ENCODE measurements at regions of chr16 and their contacts with region 1.

Region 1: GRCh38 chr16:84013787-84014569 is 28.6 kb downstream of the SLC38A8 start:
- DNase-seq: peak; percentile 98
- H3K4me3 ChIP-seq: no peak overlapping the region
- H3K27ac ChIP-seq: no peak overlapping the region
- H3K4me1 ChIP-seq: no peaks in the 10 kb centered on the region
- H3K27me3 ChIP-seq: no peaks in the 10 kb centered on the region
- CTCF ChIP-seq: no peak

Region 2: DNA sequence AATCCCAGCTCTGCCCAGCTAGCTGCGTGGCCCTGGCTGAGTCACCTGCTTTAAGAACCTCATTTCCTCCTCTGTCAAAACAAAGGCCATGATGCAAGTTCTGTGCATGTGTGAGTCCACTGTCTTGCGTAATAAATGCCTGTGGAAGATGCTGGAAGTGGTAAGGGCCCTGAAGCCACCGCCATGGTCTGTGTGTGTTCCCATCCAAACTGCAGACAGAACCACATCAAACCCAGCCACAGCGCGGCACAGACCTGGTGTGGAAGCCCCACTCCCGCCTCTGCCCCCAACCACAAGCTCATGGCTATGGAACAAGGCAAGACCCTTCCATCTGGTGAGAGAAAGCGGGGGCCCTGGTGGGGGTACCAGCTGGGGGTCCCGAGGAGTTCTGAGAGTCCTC is 19.9 kb before region 1 on chr16:
- CTCF ChIA-PET with region 1: no interaction called
- dilution Hi-C with region 1: no loop called
- in situ Hi-C with region 1: no loop called
- intact Hi-C with region 1: loop called (anchors 2 kb)
- DNase-seq: peak; percentile 88
- H3K4me3 ChIP-seq: no peak overlapping the region
- H3K27ac ChIP-seq: no peak overlapping the region
- H3K4me1 ChIP-seq: peaks cover 14% of the 10 kb centered on the region
- H3K27me3 ChIP-seq: peaks cover 5% of the 10 kb centered on the region
- CTCF ChIP-seq: no peak

Region 3: DNA sequence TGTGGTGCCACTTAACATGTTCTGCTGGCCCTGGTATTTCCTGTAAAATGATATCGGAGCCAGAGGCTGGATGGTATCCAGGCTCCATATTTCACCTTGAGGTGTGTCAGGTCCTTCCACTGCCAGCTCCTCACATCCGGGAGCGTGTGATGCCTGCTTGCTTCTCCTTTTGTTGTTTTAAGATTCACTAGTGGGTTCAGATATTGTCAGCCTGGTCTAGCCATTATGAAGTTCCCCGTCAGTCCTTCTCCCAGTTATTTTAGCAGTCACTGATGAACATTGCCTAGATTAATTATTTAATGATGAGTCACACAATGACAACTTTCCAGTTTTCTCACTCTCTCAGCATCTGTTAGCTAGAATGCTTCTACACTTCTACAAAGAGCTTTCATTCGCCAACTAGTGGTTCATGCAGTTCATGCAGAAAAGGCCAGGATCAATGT is 142.4 kb after region 1 on chr16:
- CTCF ChIA-PET with region 1: no interaction called
- dilution Hi-C with region 1: no loop called
- in situ Hi-C with region 1: no loop called
- intact Hi-C with region 1: no loop called
- DNase-seq: peak; percentile 19
- H3K4me3 ChIP-seq: no peak overlapping the region
- H3K27ac ChIP-seq: no peak overlapping the region
- H3K4me1 ChIP-seq: no peaks in the 10 kb centered on the region
- H3K27me3 ChIP-seq: no peaks in the 10 kb centered on the region
- CTCF ChIP-seq: peak; percentile 22 to 29

Region 4: GRCh38 chr16:84332975-84333684 is 319.2 kb after region 1 on chr16:
- CTCF ChIA-PET with region 1: no interaction called
- dilution Hi-C with region 1: no loop called
- in situ Hi-C with region 1: no loop called
- intact Hi-C with region 1: no loop called
- DNase-seq: no peak
- H3K4me3 ChIP-seq: no peak overlapping the region
- H3K27ac ChIP-seq: no peak overlapping the region
- H3K4me1 ChIP-seq: no peaks in the 10 kb centered on the region
- H3K27me3 ChIP-seq: peaks cover 1% of the 10 kb centered on the region
- CTCF ChIP-seq: no peak

Measured in mammary epithelial cell (primary cell).